Head of caudate nucleus (tissue), 42 donors: ENCODE measurements at regions of chr5 and their contacts with region 1.

Region 1: GRCh38 chr5:139417214-139417613 is 13.3 kb upstream of the SPATA24 start:
- DNase-seq: peak in 14 of 42 donors; percentile 16 to 78 (median 47)

Region 2: GRCh38 chr5:139560752-139561654 is 143.8 kb after region 1 on chr5 and contains the start of gene UBE2D2:
- intact Hi-C with region 1: loop called (anchors 10 kb)
- DNase-seq: peak; percentile 92 to 99 (median 96)